Right cardiac atrium (tissue), 5 donors: ENCODE measurements at regions of chr6 and their contacts with region 1.

Region 1: DNA sequence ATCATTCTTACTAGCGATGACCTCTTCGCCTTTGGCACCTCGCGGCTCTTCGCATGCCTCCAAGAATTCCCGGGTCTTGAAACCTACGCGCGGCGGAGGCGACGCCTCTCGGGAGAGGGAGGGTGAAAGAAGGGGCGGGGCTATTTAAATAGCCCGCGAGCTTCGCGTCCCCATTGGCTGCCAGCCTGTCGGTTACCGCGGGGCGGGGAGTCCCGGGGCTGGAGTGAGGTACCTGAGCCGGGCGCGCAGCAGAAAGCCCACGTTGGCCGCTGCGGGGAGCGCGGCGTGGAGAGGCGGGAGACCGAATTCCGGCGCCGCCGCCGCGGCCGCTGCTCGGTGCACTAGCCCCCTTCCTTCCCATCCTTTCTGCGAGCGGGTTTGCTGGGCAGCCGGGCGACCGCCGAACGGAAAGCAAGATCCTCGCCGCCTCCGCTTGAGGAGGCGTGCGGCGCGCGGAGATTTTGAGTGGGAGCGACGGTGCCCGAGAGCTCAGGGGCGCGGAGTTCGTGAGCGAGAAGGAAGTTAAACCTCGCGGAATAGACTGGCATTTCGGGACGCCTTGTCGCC is at the start of gene BMP6:
- DNase-seq: peak; percentile 89 to 95 (median 95)
- ATAC-seq: peak; percentile 95 to 96
- H3K4me3 ChIP-seq: peak within 1 kb of the TSS; percentile 66
- H3K27ac ChIP-seq: no peak within 1 kb of the TSS
- H3K4me1 ChIP-seq: peaks cover 2% of the 10 kb centered on the region
- H3K27me3 ChIP-seq: no peaks in the 10 kb centered on the region
- total RNA-seq, gene BMP6: 2.3 to 4.7 (median 3.6) TPM

Region 2: GRCh38 chr6:7827142-7827541 is 101.2 kb after region 1 on chr6:
- intact Hi-C with region 1: no loop called
- DNase-seq: peak; percentile 33 to 62 (median 60)
- ATAC-seq: peak; percentile 63 to 81
- H3K4me3 ChIP-seq: no peak overlapping the region
- H3K27ac ChIP-seq: no peak overlapping the region
- H3K4me1 ChIP-seq: no peaks in the 10 kb centered on the region
- H3K27me3 ChIP-seq: no peaks in the 10 kb centered on the region

Region 3: GRCh38 chr6:7992002-7992815 is 266.3 kb after region 1 on chr6:
- intact Hi-C with region 1: loop called in 3 of 4 experiments (anchors 5 kb)
- DNase-seq: peak in 2 of 3 donors; percentile 61 to 68
- ATAC-seq: peak; percentile 84 to 93
- H3K4me3 ChIP-seq: no peak overlapping the region
- H3K27ac ChIP-seq: peak overlapping the region; percentile 64
- H3K4me1 ChIP-seq: peaks cover 9% of the 10 kb centered on the region
- H3K27me3 ChIP-seq: no peaks in the 10 kb centered on the region

Region 4: DNA sequence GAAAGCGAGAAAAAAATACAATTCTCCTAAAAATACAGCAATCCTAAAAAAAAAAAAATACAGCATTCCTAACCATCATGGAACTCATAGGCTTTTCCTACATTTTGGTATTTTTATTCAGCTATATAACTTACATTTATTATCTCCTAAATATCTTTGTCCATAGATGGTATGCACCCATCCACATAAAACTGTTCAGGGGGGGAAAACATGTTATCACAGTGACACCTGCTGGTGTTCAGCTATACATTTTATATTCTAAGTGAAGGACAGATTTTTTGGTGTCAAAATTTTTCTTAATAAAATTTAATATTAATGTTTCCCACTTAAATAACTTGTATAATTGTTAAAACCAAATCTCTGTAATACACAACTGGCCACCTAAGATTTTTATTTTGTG is 280.3 kb after region 1 on chr6:
- intact Hi-C with region 1: loop called in 2 of 4 experiments (anchors 5 kb)
- DNase-seq: no peak
- ATAC-seq: peak in 1 of 2 donors; percentile 63
- H3K4me3 ChIP-seq: no peak overlapping the region
- H3K27ac ChIP-seq: no peak overlapping the region
- H3K4me1 ChIP-seq: no peaks in the 10 kb centered on the region
- H3K27me3 ChIP-seq: no peaks in the 10 kb centered on the region

Region 5: DNA sequence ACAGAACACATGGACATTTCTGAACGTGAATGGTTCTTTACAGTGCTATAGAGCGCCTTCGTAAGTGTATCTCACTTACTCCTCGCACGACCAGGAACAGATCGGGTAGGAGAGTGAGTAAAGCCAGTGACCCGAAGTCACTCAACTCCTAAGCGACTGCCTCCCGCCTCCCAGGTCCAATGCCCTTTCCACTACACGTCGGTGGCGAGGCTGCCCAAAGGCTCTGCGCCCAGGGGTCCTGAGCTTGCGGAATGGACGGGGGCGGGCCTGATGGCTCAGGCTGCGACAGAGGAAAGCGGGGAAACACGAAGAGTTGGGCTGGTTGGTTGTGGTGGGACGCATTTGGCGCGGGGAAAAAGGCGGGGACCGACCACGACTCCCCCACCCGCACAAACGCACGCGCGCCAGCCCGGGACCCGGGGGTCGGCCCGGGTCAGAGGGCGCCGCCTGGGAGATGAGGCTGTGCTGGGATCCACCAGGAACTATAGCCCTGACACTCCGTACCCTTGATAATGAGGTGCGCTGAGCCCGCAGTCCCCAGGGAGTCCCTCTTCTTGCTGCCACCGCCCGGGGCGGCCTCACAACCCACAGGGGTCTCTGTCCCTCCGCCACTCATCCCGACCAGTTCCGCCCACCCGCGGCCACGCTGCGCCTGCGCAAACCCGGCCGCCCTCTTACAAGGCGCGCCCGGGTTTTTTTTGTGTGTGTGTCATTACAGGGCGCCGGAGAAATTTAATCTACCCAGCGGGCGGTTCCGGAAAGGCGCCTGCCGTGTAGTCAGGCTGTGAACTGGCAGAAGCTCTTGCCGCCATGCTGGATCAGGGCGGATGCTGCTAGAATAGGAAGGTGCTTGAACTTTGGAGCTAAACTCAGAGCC is 338.1 kb after region 1 on chr6 and contains the start of gene BLOC1S5:
- intact Hi-C with region 1: loop called (anchors 5 to 10 kb)
- DNase-seq: peak; percentile 96 to 99 (median 98)
- ATAC-seq: peak; percentile 99
- H3K4me3 ChIP-seq: peak within 1 kb of the TSS; percentile 67
- H3K27ac ChIP-seq: peak within 1 kb of the TSS; percentile 48
- H3K4me1 ChIP-seq: peaks cover 3% of the 10 kb centered on the region
- H3K27me3 ChIP-seq: no peaks in the 10 kb centered on the region
- total RNA-seq, gene BLOC1S5: 7.1 to 10.9 (median 8.9) TPM

Region 6: DNA sequence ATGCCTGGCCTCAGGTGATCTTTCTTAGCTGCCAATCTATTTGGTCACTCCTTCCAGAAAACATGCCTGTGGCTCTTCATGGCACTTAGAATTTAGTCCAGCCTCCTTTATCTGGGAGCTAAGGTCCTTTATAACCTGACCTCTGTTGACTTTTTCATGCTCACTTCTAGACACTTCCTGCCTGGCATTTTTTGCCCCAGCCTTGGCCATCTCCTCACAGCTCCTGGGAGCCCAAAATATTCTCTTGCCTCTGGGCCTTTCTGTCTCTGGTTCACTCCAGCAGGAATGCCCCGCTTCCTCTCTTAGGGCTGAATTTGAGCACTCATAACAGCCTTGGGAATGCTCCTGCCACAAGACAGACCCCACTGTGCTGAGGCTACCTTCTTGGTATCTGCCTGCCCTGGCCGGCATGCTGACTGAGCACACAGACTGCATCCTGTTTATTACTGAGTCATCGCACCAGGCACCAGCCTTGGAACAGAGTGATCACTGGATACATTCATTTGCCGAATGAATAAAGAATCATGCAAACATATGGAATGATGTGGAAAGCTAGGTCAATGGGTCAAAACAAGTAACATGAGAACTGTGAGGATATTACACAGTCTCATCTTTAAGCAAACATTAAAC is 382.2 kb after region 1 on chr6:
- intact Hi-C with region 1: no loop called
- DNase-seq: no peak
- ATAC-seq: no peak
- H3K4me3 ChIP-seq: no peak overlapping the region
- H3K27ac ChIP-seq: no peak overlapping the region
- H3K4me1 ChIP-seq: no peaks in the 10 kb centered on the region
- H3K27me3 ChIP-seq: no peaks in the 10 kb centered on the region